ENCODE measurements at regions of chr6 and their contacts with region 1.

Region 1: DNA sequence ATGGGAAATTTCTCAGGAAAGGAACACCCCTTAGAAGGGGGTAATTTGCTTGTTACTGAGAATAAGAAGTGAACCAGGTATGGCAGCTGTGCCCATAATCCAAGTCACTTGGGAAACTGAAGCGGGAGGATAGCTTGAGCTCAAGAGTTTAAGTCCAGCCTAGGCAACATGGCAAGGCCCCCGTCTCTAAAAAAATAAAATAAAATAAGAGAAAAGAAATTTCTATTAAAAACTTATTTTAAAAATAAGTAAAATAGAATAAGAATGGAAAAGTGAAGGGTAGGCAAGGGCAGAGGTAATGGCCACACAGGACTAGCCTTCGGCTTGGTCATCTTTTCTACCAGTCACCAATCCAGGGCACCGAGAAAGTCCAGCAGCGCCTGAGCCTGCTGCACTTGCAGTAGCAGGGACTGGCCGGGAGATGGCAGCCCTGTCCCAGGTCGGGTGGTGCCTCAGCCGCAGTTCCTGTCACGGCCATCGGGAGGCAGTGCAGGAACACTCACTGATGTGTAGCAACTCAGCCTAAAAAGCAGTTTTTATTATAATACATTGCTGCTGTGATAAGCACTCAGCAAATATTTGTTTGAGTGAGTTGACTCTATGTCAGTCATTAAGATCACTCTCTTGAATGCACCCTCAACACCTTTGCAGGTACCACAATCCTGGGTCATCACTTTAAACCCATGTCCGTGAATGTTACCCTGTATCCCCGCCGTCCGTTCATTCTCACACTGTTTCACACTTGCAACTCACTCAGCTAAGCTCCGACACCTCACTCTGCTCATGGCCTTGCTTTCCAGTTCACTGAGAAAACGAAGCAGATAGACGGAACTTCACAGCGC is 23.2 kb upstream of the GCM1 start:
- DNase-seq: peak; percentile 91
- ATAC-seq: peak; percentile 98
- H3K4me3 Mint-ChIP-seq: peak overlapping the region; percentile 68
- H3K27ac Mint-ChIP-seq: peak overlapping the region; percentile 87
- H3K4me1 Mint-ChIP-seq: peaks cover 24% of the 10 kb centered on the region
- H3K27me3 Mint-ChIP-seq: no peaks in the 10 kb centered on the region
- CTCF ChIP-seq: peak; percentile 100

Region 2: DNA sequence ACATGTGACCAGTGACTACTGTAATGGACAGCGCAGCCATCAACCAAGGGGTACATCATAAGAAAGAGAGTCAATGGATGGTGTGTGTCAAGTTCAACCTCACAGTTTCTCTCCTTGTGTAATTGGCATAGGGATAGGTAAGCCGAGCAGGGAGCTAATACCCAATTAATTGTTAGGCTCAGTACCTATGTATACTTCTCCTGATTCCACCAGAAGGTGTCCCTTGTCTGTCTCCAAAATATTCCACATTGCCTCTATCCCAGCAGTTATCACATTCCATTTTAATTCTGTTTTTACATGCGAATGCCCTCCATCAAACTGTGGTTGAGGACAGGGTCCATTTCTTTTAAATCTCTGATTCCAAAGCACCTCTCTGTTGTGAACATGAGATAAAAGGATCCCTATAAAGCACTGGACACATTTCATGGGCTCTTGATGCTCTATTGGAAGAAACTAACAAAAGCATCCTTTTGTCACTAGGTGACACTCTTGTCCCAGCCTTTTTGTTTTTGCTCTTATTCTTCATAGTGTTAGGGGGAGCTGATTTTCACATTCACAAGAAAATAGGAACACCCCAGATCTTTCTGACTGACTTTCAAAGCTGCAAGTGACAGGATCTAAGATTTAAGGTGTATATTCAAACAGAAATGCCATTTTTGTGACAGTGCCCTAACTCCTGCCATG is 67.7 kb before region 1 on chr6:
- CTCF ChIA-PET with region 1: no interaction called
- POLR2A ChIA-PET with region 1: interaction called, 10 read pairs
- intact Hi-C with region 1: no loop called
- DNase-seq: no peak
- ATAC-seq: peak; percentile 28
- H3K4me3 Mint-ChIP-seq: no peak overlapping the region
- H3K27ac Mint-ChIP-seq: no peak overlapping the region
- H3K4me1 Mint-ChIP-seq: no peaks in the 10 kb centered on the region
- H3K27me3 Mint-ChIP-seq: no peaks in the 10 kb centered on the region
- CTCF ChIP-seq: no peak

Region 3: DNA sequence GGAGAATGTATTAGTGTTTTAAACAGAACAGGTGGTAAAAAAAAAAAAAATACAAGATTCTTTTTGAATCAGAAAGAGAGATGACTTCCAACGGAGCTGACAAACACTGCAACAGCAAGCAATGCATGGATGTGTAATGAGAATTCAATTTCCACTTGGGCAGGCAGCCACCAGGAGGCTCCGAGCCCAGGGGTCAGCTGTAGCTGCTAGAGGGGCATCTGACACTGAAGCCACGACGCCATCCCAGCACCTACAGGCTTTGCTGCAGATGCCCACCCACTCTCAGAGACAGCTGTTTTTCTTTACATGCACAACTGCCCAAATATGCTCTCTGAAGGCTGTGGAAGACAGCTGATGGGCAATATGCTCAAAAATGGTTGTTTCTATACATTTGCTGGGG is 101.5 kb after region 1 on chr6:
- CTCF ChIA-PET with region 1: interaction called, 12 read pairs
- POLR2A ChIA-PET with region 1: interaction called, 3 read pairs
- intact Hi-C with region 1: no loop called
- DNase-seq: no peak
- ATAC-seq: no peak
- H3K4me3 Mint-ChIP-seq: no peak overlapping the region
- H3K27ac Mint-ChIP-seq: no peak overlapping the region
- H3K4me1 Mint-ChIP-seq: peaks cover 38% of the 10 kb centered on the region
- H3K27me3 Mint-ChIP-seq: no peaks in the 10 kb centered on the region
- CTCF ChIP-seq: no peak

Region 4: DNA sequence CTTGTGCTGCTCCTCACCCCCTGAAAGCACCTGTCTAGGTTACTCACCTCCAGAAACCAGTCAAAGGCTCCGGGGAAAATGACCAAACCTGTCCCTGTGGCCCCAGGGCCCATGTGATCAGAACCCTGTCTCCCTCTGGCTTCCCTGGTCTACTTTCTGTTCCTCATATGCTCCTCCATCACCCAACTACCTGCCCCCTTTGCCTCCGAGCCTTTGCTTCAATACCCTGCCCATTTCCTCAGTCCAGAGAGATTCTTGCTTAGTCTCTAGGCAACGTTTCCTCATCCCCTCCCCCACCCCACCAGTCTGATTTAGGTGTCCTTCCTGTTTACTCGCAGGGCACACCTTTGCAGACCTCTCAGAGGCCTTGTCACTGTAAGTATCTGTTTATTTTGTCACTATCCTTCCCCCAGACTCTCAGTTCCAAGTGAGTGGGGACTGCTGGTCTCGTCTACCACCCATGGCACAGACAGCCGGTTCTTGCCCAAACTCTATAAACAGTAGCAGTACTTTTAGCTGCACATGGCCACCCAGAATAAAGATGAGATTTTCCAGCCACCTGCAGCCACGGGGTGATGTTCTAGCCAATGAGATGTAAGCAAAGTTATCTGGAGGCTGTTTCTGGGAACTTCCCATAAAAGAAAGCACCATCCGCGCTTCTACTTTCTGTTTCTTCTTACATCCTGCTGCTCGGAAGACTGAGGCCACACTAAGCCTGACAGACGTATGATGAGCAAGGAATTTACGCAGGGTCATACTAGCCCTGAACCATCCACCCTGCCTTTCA is 163.6 kb after region 1 on chr6:
- CTCF ChIA-PET with region 1: no interaction called
- POLR2A ChIA-PET with region 1: no interaction called
- intact Hi-C with region 1: loop called (anchors 1 kb)
- DNase-seq: peak; percentile 56
- ATAC-seq: peak; percentile 85
- H3K4me3 Mint-ChIP-seq: peak overlapping the region; percentile 84
- H3K27ac Mint-ChIP-seq: peak overlapping the region; percentile 97
- H3K4me1 Mint-ChIP-seq: peaks cover 93% of the 10 kb centered on the region
- H3K27me3 Mint-ChIP-seq: no peaks in the 10 kb centered on the region
- CTCF ChIP-seq: no peak

Region 5: DNA sequence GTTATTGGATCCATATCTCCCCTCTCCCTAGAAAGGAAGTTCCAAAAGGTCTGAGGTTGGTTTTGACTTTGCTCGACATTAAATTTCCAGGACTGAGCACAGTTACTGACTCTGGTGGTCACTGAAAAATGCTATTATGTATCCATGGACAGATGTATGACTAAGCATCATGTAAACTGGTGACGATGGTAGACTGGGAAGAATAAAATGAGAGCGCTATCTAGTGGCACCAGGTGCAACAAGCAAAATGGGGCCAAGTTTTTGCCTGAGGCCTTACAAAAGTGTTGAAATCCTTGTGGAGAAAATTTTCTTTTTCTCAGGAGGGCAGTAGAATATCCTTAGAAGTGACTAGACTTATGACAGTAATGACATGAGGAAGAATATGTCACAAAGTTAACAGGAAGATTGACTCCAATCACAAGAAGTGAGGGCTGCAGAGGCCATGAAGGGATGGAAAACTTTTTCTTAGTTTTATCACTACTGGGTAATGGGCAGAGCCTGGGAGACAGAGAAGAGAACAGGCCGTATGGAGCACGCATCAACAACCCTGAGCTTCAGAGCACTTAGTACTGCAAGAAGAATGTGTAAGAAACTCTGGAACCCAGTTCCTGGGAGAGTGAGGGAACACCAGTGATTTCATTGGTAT is 265.9 kb after region 1 on chr6:
- CTCF ChIA-PET with region 1: interaction called, 25 read pairs
- POLR2A ChIA-PET with region 1: interaction called, 3 read pairs
- intact Hi-C with region 1: loop called (anchors 1 kb)
- DNase-seq: no peak
- ATAC-seq: peak; percentile 77
- H3K4me3 Mint-ChIP-seq: no peak overlapping the region
- H3K27ac Mint-ChIP-seq: no peak overlapping the region
- H3K4me1 Mint-ChIP-seq: peaks cover 20% of the 10 kb centered on the region
- H3K27me3 Mint-ChIP-seq: no peaks in the 10 kb centered on the region
- CTCF ChIP-seq: no peak

Region 6: DNA sequence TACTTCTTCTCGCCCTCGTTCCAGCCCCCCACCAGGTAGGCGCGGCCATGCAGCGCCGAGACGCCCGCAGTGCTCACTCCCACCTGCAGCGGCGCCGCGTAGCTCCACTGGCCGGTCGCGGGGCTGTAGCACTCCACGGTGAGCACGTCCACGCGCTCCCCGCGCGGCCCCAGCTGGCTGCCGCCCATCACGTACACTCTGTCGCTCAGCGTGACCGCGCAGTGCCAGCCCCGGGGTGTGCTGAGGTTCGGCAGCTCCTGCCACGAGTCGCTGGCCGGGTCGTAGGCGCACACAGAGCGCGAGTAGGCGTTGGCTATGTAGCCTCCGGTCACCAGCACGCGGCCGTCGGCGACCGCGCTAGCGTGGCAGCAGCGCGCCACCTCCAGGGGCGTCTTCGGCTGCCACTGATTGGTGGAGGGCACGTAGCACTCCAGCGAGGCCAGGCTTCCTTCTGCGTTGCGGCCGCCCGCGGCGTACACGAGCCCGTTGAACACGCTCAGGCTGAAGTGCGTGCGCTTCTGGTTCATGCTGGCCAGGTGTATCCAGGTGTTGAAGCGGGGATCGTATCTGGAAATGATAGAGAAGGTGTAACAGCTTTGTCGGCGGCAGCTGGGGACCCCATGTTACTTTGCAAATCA is 480.1 kb after region 1 on chr6:
- CTCF ChIA-PET with region 1: interaction called, 4 read pairs
- POLR2A ChIA-PET with region 1: no interaction called
- intact Hi-C with region 1: loop called (anchors 1 kb)
- DNase-seq: peak; percentile 63
- ATAC-seq: peak; percentile 88
- H3K4me3 Mint-ChIP-seq: peak overlapping the region; percentile 87
- H3K27ac Mint-ChIP-seq: peak overlapping the region; percentile 68
- H3K4me1 Mint-ChIP-seq: peaks cover 20% of the 10 kb centered on the region
- H3K27me3 Mint-ChIP-seq: peaks cover 4% of the 10 kb centered on the region
- CTCF ChIP-seq: no peak